ENCODE measurements at regions of chrX and their contacts with region 1.

Region 1: GRCh38 chrX:10615931-10616775 is 4.2 kb downstream of the MID1 start:
- DNase-seq: peak; percentile 53
- H3K4me3 ChIP-seq: 0 out of 2 replicates have a peak overlapping the region, but pooled peaks have one; percentile 42
- H3K27ac ChIP-seq: peak overlapping the region; percentile 48
- H3K4me1 ChIP-seq: peaks cover 44% of the 10 kb centered on the region
- H3K27me3 ChIP-seq: no peaks in the 10 kb centered on the region

Region 2: DNA sequence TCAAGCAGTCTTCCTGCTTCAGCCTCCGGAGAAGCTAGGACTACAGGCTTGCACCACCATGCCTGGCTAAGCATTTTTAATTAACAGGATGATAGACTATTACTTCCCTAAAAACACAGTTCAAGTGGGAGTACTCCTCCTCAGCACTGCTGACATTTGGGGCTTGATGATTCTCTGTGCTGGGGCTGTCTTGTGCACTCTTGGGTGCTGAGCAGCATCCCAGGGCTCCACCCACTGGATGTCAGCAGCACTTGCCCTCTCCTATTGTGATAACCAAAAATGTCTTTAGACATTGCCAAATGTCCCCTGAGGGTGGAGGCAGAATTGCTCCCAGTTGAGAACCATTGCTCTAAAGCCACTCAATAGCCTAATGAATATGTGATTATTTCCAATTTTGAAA is 399.0 kb before region 1 on chrX:
- in situ Hi-C with region 1: loop called (anchors 25 kb)
- DNase-seq: no peak
- H3K4me3 ChIP-seq: no peak overlapping the region
- H3K27ac ChIP-seq: no peak overlapping the region
- H3K4me1 ChIP-seq: no peaks in the 10 kb centered on the region
- H3K27me3 ChIP-seq: no peaks in the 10 kb centered on the region

Region 3: DNA sequence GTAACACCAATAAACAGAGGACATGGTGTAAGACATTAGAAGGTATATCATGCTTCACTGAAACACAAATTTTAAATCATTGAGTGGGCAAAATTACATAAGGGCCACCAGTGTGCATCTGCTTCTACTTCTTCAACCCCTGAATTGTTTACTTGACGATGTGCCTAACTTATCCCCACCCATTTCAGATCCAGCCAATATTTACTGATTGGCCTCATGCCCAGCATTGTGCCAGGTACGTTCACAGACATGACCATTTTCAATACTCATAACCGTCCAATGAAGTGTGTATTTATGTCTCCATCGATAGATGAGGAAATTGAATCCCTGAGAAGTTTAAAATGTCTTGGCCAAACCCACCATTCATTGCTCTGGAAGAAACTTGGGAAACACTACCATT is 212.5 kb after region 1 on chrX:
- in situ Hi-C with region 1: no loop called
- DNase-seq: no peak
- H3K4me3 ChIP-seq: no peak overlapping the region
- H3K27ac ChIP-seq: no peak overlapping the region
- H3K4me1 ChIP-seq: 0 out of 2 replicates have a peak, but pooled peaks cover 2% of the 10 kb centered on the region
- H3K27me3 ChIP-seq: no peaks in the 10 kb centered on the region